B cell (primary cell): ENCODE measurements at regions of chr5 and their contacts with region 1.

Region 1: DNA sequence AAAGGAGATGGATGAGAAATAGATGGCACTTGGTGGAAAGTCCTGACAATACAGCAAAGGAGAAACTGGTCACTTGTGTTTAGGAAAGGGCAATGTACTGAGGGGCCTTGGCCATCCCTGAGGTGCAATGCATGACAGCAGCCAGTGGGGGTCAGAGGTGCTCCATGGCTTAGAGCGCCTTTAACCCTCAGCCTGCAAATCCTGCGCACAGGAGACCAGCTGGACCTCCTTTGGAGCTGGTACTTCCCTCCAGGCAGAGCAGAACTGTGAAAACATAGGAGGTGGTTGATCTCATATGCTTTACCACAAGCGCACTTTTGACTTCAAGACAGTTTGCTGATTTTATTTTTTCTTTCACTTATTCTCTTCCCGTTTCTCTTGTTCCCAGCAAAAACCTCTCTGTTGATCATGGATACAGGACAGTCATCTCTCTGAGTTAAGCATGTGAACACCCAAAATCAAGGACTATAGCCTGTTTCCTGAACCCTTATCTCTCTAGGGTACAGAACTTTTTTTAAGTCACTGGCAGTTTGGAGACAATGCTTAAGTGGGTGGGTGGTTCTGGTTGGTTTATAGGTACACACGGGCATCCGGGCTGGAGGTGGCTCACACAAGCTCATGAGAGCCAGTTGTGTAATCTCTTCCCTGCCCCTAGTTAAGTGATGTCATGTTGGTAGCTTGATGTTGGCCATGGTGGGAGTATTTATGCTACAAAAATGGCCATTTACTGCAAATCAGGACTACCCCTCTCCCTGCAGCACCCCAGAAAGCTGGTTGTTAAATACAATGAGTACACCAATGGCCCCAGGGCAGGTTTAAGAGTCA is 37.6 kb upstream of the ANKRD55 start:
- DNase-seq: peak; percentile 85
- ATAC-seq: peak; percentile 99
- H3K4me3 ChIP-seq: peak overlapping the region in 4 of 5 experiments; percentile 1 to 24 (median 8)
- H3K4me3 Mint-ChIP-seq: peak overlapping the region; percentile 73
- H3K27ac ChIP-seq: peak overlapping the region; percentile 26 to 63
- H3K27ac Mint-ChIP-seq: peak overlapping the region; percentile 76
- H3K4me1 ChIP-seq: peaks cover 23 to 24% of the 10 kb centered on the region in 2 donors
- H3K4me1 Mint-ChIP-seq: peaks cover 19% of the 10 kb centered on the region
- H3K27me3 ChIP-seq: no peaks in the 10 kb centered on the region
- H3K27me3 Mint-ChIP-seq: no peaks in the 10 kb centered on the region
- CTCF ChIP-seq: peak; percentile 97

Region 2: DNA sequence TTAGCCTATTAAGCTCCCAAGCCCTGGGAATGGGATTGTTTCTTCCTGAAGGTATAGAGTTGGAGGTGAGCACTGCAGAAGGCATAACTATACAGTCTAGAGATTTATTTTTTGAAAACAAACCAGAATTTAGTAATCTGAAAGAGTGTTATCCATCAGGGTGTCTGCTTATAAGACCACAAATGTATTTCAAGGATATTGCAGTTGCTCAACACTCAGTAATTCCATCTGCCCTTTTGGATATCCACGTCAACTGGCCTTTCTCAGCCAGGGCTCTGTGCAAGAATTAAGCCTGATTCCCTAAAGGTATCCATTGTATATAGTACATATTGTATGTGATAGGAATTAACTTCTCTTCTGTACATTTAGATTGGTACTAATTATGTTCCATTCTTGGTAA is 434.6 kb before region 1 on chr5:
- CTCF ChIA-PET with region 1: no interaction called
- POLR2A ChIA-PET with region 1: no interaction called
- intact Hi-C with region 1: no loop called
- DNase-seq: no peak
- ATAC-seq: no peak
- H3K4me3 ChIP-seq: no peak overlapping the region
- H3K4me3 Mint-ChIP-seq: no peak overlapping the region
- H3K27ac ChIP-seq: no peak overlapping the region
- H3K27ac Mint-ChIP-seq: no peak overlapping the region
- H3K4me1 ChIP-seq: no peaks in the 10 kb centered on the region
- H3K4me1 Mint-ChIP-seq: no peaks in the 10 kb centered on the region
- H3K27me3 ChIP-seq: no peaks in the 10 kb centered on the region
- H3K27me3 Mint-ChIP-seq: peaks cover 20% of the 10 kb centered on the region
- CTCF ChIP-seq: no peak

Region 3: GRCh38 chr5:55936100-55936693 is 334.6 kb before region 1 on chr5:
- CTCF ChIA-PET with region 1: interaction called, 36 read pairs
- POLR2A ChIA-PET with region 1: no interaction called
- intact Hi-C with region 1: loop called (anchors 1 kb)
- DNase-seq: peak; percentile 83
- ATAC-seq: peak; percentile 89
- H3K4me3 ChIP-seq: no peak overlapping the region
- H3K4me3 Mint-ChIP-seq: no peak overlapping the region
- H3K27ac ChIP-seq: no peak overlapping the region
- H3K27ac Mint-ChIP-seq: no peak overlapping the region
- H3K4me1 ChIP-seq: no peaks in the 10 kb centered on the region
- H3K4me1 Mint-ChIP-seq: no peaks in the 10 kb centered on the region
- H3K27me3 ChIP-seq: no peaks in the 10 kb centered on the region
- H3K27me3 Mint-ChIP-seq: no peaks in the 10 kb centered on the region
- CTCF ChIP-seq: peak; percentile 92

Region 4: DNA sequence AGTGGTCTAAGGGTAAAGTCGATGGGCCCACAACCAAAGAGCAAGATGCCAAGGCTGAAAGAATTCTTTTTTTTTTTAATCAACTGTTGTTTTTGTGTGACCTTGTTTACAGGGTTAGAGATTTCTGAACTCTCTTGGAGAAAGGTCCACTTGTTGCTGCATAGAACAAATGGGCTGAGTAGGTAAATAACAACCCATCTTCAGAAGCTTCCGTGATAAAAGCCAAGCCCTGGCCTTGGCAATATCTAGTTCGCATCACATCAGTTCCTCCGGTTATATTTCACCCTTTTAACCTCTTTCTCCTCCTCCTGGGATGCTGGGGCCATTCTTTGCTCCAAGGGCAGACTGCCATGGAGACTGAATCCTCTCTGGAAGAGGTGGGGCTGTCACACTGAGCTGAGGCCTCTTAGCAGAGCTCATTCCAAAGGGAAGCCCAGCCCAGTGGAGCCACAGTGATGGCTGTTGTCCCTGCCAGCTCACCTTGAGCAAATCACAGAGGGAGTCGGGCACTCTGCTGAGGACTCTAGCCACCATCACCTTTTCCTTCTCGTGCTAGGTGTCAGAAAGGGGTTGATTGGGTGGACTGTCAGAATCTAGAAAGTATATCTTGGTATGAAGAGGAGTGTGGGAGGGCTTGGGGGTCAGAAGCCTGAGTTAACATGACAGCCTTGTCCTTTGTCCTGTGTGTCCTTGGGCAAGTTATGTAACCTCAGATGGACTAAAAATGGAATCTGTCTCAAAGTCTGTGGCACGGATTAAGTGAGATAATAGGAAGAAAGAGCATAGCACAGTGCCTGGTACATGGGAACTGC is 55.6 kb before region 1 on chr5:
- CTCF ChIA-PET with region 1: no interaction called
- POLR2A ChIA-PET with region 1: no interaction called
- intact Hi-C with region 1: no loop called
- DNase-seq: no peak
- ATAC-seq: no peak
- H3K4me3 ChIP-seq: no peak overlapping the region
- H3K4me3 Mint-ChIP-seq: no peak overlapping the region
- H3K27ac ChIP-seq: no peak overlapping the region
- H3K27ac Mint-ChIP-seq: no peak overlapping the region
- H3K4me1 ChIP-seq: no peaks in the 10 kb centered on the region
- H3K4me1 Mint-ChIP-seq: no peaks in the 10 kb centered on the region
- H3K27me3 ChIP-seq: peaks cover 0 to 5% (median 1%) of the 10 kb centered on the region in 4 experiments
- H3K27me3 Mint-ChIP-seq: peaks cover 26% of the 10 kb centered on the region
- CTCF ChIP-seq: no peak

Region 5: GRCh38 chr5:56415356-56415765 is 144.6 kb after region 1 on chr5:
- CTCF ChIA-PET with region 1: interaction called, 6 read pairs
- POLR2A ChIA-PET with region 1: interaction called, 3 read pairs
- intact Hi-C with region 1: loop called (anchors 2 kb)
- DNase-seq: peak; percentile 89
- ATAC-seq: peak; percentile 71
- H3K4me3 ChIP-seq: peak overlapping the region in 3 of 5 experiments; percentile 21 to 56 (median 21)
- H3K4me3 Mint-ChIP-seq: peak overlapping the region; percentile 76
- H3K27ac ChIP-seq: peak overlapping the region; percentile 95 to 98
- H3K27ac Mint-ChIP-seq: peak overlapping the region; percentile 96
- H3K4me1 ChIP-seq: peaks cover 73 to 74% of the 10 kb centered on the region in 2 donors
- H3K4me1 Mint-ChIP-seq: peaks cover 80% of the 10 kb centered on the region
- H3K27me3 ChIP-seq: no peaks in the 10 kb centered on the region
- H3K27me3 Mint-ChIP-seq: no peaks in the 10 kb centered on the region
- CTCF ChIP-seq: no peak

Region 6: DNA sequence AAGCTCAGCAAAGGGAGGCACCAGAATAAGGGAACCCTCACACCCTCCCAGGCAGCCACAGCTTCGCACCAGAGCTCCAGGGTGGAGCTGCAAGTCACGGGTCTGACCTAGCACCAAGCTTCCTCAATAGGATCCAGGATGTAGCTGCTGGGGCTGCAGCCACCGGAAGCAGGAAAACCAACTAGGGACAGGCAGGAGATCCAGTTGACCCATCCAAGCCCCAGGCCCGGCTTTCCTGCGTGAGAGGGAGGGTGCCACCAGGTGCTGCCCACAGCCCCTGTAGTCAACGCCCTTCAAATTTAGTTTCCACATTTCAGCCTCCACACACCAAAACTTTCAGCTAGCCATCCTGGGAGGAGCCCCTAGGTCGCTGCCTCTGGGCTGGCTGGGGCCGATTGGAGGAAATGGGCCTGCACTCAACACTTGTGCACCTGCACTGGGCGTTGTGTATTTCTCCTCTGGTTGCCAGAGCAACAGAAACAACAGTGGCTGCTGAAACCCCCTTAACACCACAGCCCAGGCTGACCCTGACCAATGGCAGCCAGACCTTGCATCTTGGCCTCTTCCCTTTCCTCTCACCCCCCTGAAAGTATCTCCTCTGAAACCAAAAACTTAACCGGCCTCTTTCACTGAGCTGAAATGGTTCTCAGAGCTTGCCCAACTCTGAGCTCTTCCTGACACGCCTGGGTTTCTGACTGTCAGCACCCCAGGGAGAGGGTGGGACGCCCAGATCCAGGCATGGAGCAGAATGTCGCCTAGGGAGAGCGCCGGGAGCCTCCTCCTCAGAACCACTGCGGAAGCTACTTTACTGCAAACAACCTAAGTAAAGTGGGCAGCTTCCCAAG is 318.1 kb after region 1 on chr5:
- CTCF ChIA-PET with region 1: interaction called, 13 read pairs
- POLR2A ChIA-PET with region 1: no interaction called
- intact Hi-C with region 1: loop called (anchors 2 kb)
- DNase-seq: peak; percentile 98
- ATAC-seq: peak; percentile 85
- H3K4me3 ChIP-seq: peak overlapping the region in 3 of 5 experiments; percentile 22 to 41 (median 25)
- H3K4me3 Mint-ChIP-seq: peak overlapping the region; percentile 59
- H3K27ac ChIP-seq: peak overlapping the region; percentile 99 to 100
- H3K27ac Mint-ChIP-seq: peak overlapping the region; percentile 96
- H3K4me1 ChIP-seq: peaks cover 63 to 67% of the 10 kb centered on the region in 2 donors
- H3K4me1 Mint-ChIP-seq: peaks cover 77% of the 10 kb centered on the region
- H3K27me3 ChIP-seq: no peaks in the 10 kb centered on the region
- H3K27me3 Mint-ChIP-seq: no peaks in the 10 kb centered on the region
- CTCF ChIP-seq: no peak

Region 7: DNA sequence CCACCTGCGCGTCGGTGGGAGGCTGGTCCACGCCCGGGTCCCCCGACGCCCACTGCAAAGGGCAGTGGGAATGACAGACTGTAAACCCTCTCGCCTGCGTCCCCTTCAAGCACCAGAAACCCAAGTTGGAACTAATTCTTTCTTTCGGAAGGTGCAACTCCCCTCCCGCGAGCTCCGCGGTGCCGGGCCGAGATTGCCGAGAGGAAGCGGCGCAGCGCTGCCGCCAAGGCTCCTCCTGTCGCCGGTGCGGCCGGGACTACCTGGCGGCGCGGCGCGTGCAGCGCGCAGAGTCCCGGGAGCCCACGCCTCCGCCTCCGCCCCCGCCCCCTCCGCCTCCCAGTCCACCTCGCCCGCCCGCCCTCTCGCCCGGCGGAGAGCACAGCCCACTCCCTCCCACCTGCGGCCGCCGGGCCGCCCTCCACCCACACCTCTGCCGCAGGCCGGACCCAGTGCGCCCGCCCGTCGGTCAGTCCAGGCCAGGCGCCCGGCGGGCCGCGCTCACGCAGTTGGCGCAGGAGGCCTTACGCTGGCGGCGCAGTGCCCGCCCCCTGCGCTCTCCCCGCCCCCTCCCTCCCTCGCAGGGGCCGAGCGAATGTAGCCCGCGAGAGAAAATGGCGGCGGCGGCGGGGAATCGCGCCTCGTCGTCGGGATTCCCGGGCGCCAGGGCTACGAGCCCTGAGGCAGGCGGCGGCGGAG is 544.3 kb after region 1 on chr5 and contains the start of gene MAP3K1:
- CTCF ChIA-PET with region 1: interaction called, 18 read pairs
- POLR2A ChIA-PET with region 1: no interaction called
- intact Hi-C with region 1: loop called (anchors 1 kb)
- DNase-seq: peak; percentile 93
- ATAC-seq: peak; percentile 65
- H3K4me3 ChIP-seq: peak within 1 kb of the TSS; percentile 73 to 97 (median 87)
- H3K4me3 Mint-ChIP-seq: peak within 1 kb of the TSS; percentile 97
- H3K27ac ChIP-seq: peak within 1 kb of the TSS; percentile 91 to 94
- H3K27ac Mint-ChIP-seq: peak within 1 kb of the TSS; percentile 99
- H3K4me1 ChIP-seq: peaks cover 25 to 29% of the 10 kb centered on the region in 2 donors
- H3K4me1 Mint-ChIP-seq: peaks cover 44% of the 10 kb centered on the region
- H3K27me3 ChIP-seq: no peaks in the 10 kb centered on the region
- H3K27me3 Mint-ChIP-seq: no peaks in the 10 kb centered on the region
- CTCF ChIP-seq: no peak
- total RNA-seq, gene MAP3K1: 160 and 164 TPM in 2 replicates

Region 8: GRCh38 chr5:56856541-56857178 is 585.9 kb after region 1 on chr5:
- CTCF ChIA-PET with region 1: interaction called, 29 read pairs
- POLR2A ChIA-PET with region 1: interaction called, 3 read pairs
- intact Hi-C with region 1: no loop called
- DNase-seq: no peak
- ATAC-seq: no peak
- H3K4me3 ChIP-seq: no peak overlapping the region
- H3K4me3 Mint-ChIP-seq: peak overlapping the region; percentile 48
- H3K27ac ChIP-seq: peak overlapping the region in 1 of 2 donors; percentile 84
- H3K27ac Mint-ChIP-seq: peak overlapping the region; percentile 68
- H3K4me1 ChIP-seq: peaks cover 34 to 53% of the 10 kb centered on the region in 2 donors
- H3K4me1 Mint-ChIP-seq: peaks cover 62% of the 10 kb centered on the region
- H3K27me3 ChIP-seq: no peaks in the 10 kb centered on the region
- H3K27me3 Mint-ChIP-seq: no peaks in the 10 kb centered on the region
- CTCF ChIP-seq: no peak

Region 9: DNA sequence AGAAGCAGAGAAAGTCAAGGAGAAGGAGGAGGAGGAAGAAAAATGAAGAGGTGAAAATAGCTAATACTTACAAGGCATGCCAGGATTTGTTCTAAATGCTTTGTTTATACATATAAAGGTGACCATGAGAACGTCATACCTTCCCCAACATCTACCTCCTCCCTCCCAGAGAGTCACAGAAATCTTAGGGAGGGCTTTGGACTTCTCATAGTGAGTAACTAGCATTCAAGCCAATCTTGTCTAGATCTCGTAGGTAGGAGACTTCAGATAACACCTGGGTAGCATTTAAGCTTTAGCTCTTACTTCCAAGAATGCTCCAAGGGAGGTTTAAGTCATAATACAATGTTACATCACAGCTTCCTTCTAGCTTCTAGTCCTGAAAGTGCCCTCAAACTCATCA is 866.6 kb after region 1 on chr5:
- CTCF ChIA-PET with region 1: interaction called, 47 read pairs
- POLR2A ChIA-PET with region 1: no interaction called
- intact Hi-C with region 1: no loop called
- DNase-seq: no peak
- ATAC-seq: no peak
- H3K4me3 ChIP-seq: no peak overlapping the region
- H3K4me3 Mint-ChIP-seq: no peak overlapping the region
- H3K27ac ChIP-seq: no peak overlapping the region
- H3K27ac Mint-ChIP-seq: no peak overlapping the region
- H3K4me1 ChIP-seq: no peaks in the 10 kb centered on the region
- H3K4me1 Mint-ChIP-seq: no peaks in the 10 kb centered on the region
- H3K27me3 ChIP-seq: no peaks in the 10 kb centered on the region
- H3K27me3 Mint-ChIP-seq: peaks cover 12% of the 10 kb centered on the region
- CTCF ChIP-seq: no peak